Activated CD4-positive, alpha-beta memory T cell treated with anti-CD3 and anti-CD28 coated beads for 36 hours (primary cell): ENCODE measurements at regions of chr19 and their contacts with region 1.

Region 1: GRCh38 chr19:7705387-7706187 is 3.7 kb upstream of the FCER2 start:
- DNase-seq: peak; percentile 91
- H3K4me3 Mint-ChIP-seq: peak overlapping the region; percentile 30
- H3K27ac Mint-ChIP-seq: peak overlapping the region; percentile 61
- H3K4me1 Mint-ChIP-seq: peaks cover 30% of the 10 kb centered on the region
- H3K27me3 Mint-ChIP-seq: peaks cover 3% of the 10 kb centered on the region

Region 2: DNA sequence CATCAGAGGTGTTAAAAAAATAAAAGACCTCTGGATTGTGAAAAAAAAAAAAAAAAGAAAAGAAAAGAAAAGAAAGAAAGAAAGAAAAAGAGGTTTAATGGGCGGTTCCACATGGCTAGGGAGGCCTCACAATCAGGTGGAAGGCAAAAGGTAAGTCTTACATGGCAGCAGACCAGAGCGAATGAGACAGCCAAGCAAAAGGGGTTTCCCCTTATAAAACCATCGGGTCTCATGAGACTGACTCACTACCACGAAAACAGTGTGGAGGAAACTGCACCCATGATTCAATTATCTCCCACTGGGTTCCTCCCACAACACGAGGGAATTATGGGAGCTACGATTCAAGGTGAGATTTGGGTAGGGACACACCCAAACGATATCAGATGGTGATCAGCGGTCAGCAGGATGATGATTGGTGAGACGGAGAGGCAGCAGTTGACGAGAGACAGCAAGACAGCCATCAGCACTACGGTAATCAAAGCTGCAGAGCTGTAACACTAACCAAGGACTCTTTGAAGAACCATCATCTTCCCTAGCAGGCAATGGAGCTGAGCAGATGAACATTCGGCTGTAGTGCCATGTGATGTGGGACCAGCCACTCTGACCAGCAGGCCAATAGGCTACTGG is 45.7 kb after region 1 on chr19:
- CTCF ChIA-PET with region 1: no interaction called
- POLR2A ChIA-PET with region 1: no interaction called
- intact Hi-C with region 1: loop called (anchors 5 kb)
- DNase-seq: peak; percentile 67
- H3K4me3 Mint-ChIP-seq: no peak overlapping the region
- H3K27ac Mint-ChIP-seq: peak overlapping the region; percentile 35
- H3K4me1 Mint-ChIP-seq: peaks cover 28% of the 10 kb centered on the region
- H3K27me3 Mint-ChIP-seq: peaks cover 22% of the 10 kb centered on the region